ENCODE measurements at regions of chrX and their contacts with region 1.

Region 1: GRCh38 chrX:149470955-149471354 is 34.2 kb downstream of the IDS start:
- DNase-seq: peak; percentile 80
- H3K4me3 ChIP-seq: no peak overlapping the region
- H3K27ac ChIP-seq: no peak overlapping the region
- H3K4me1 ChIP-seq: no peaks in the 10 kb centered on the region
- H3K27me3 ChIP-seq: no peaks in the 10 kb centered on the region
- CTCF ChIP-seq: peak; percentile 50 to 72 (median 60)
- EP300 ChIP-seq: no peak
- POLR2A ChIP-seq: no peak

Region 2: GRCh38 chrX:148049441-148049840 is 1421.5 kb before region 1 on chrX:
- intact Hi-C with region 1: loop called (anchors 2 kb)
- DNase-seq: no peak
- H3K4me3 ChIP-seq: no peak overlapping the region
- H3K27ac ChIP-seq: no peak overlapping the region
- H3K4me1 ChIP-seq: no peaks in the 10 kb centered on the region
- H3K27me3 ChIP-seq: no peaks in the 10 kb centered on the region
- CTCF ChIP-seq: peak in 1 of 4 experiments; percentile 44
- EP300 ChIP-seq: no peak
- POLR2A ChIP-seq: no peak

Region 3: DNA sequence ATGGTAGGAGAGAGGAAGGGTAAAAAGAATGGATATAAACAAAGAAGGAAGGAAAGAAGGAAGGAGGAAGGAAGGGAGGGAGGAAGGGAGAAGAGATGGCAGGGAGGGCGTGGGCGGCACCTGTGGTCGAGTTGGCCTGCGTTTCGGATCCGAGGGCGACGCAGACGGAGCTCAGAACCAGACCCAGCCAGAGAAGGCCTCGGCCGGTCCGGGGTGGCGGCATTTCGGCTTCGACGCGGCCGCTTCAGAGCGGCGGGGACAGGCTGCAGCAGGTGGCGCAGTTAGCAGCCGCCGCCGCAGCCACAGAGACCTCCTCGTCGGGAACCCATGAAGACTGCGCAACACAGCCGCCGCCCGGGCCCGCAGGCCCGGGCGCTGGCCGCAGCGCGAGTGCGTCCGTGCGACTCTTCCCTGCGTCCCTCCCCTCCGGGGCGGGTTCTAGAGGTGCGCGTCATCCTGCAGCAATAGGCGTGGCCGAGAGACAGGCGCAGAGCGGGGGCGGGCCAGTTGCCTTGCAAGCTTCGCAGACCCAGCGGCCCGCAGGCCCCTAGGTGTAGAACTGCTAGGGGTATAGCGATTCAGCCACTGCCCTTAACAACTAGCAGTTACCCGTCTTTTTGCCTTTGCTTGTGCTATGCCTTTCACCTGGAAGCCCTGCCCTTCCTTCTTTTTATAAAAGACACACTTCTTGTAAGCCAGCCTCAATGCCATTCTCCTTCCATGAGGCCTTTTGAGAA is 34.1 kb after region 1 on chrX and contains the start of gene IDS:
- intact Hi-C with region 1: no loop called
- DNase-seq: peak; percentile 96
- H3K4me3 ChIP-seq: peak within 1 kb of the TSS; percentile 65 to 69 (median 68)
- H3K27ac ChIP-seq: peak within 1 kb of the TSS; percentile 83 to 94 (median 88)
- H3K4me1 ChIP-seq: peaks cover 0 to 10% (median 2%) of the 10 kb centered on the region in 4 donors
- H3K27me3 ChIP-seq: no peaks in the 10 kb centered on the region
- CTCF ChIP-seq: no peak
- EP300 ChIP-seq: no peak
- POLR2A ChIP-seq: peak; percentile 91 to 95
- total RNA-seq, gene IDS: 71.3 to 97.2 (median 89.9) TPM

Measured in sigmoid colon (tissue), 7 donors.